CD8-positive, alpha-beta T cell (primary cell): ENCODE measurements at regions of chr2 and their contacts with region 1.

Region 1: GRCh38 chr2:227238238-227239237 is 74.1 kb downstream of the COL4A3 start:
- DNase-seq: peak; percentile 7 to 70 (median 56)
- ATAC-seq: no peak
- H3K4me3 ChIP-seq: no peak overlapping the region
- H3K4me3 Mint-ChIP-seq: no peak overlapping the region
- H3K27ac ChIP-seq: no peak overlapping the region
- H3K27ac Mint-ChIP-seq: no peak overlapping the region
- H3K4me1 ChIP-seq: no peaks in the 10 kb centered on the region
- H3K4me1 Mint-ChIP-seq: no peaks in the 10 kb centered on the region
- H3K27me3 ChIP-seq: no peaks in the 10 kb centered on the region
- H3K27me3 Mint-ChIP-seq: peaks cover 11% of the 10 kb centered on the region
- CTCF ChIP-seq: peak; percentile 98

Region 2: GRCh38 chr2:225668606-225669266 is 1569.8 kb before region 1 on chr2:
- CTCF ChIA-PET with region 1: interaction called, 9 read pairs
- POLR2A ChIA-PET with region 1: no interaction called
- intact Hi-C with region 1: loop called in 1 of 2 experiments (anchors 2 kb)
- DNase-seq: peak in 3 of 9 experiments; percentile 17 to 67 (median 52)
- ATAC-seq: peak; percentile 68
- H3K4me3 ChIP-seq: no peak overlapping the region
- H3K4me3 Mint-ChIP-seq: no peak overlapping the region
- H3K27ac ChIP-seq: no peak overlapping the region
- H3K27ac Mint-ChIP-seq: no peak overlapping the region
- H3K4me1 ChIP-seq: no peaks in the 10 kb centered on the region
- H3K4me1 Mint-ChIP-seq: no peaks in the 10 kb centered on the region
- H3K27me3 ChIP-seq: no peaks in the 10 kb centered on the region
- H3K27me3 Mint-ChIP-seq: peaks cover 7% of the 10 kb centered on the region
- CTCF ChIP-seq: peak; percentile 74

Region 3: DNA sequence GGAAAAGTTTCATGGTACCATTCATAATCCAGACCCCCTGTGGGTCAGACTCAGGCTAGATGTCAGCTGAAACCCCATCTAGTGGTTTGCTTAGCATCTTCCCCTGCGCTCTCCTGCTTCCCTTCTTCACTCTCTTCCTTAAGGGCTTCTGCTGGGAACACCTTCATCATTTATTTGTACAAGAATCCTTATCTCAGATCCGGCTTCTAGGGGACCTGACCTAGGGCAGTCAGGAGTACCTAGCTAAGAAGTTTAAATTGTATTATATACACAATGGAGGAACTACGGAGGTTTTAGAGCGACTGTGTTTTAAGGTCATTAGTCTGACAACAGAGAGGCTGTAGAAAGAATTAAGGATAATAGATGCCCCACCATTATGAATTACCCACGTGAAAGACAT is 950.6 kb before region 1 on chr2:
- CTCF ChIA-PET with region 1: no interaction called
- POLR2A ChIA-PET with region 1: no interaction called
- intact Hi-C with region 1: no loop called
- DNase-seq: no peak
- ATAC-seq: no peak
- H3K4me3 ChIP-seq: no peak overlapping the region
- H3K4me3 Mint-ChIP-seq: no peak overlapping the region
- H3K27ac ChIP-seq: no peak overlapping the region
- H3K27ac Mint-ChIP-seq: no peak overlapping the region
- H3K4me1 ChIP-seq: no peaks in the 10 kb centered on the region
- H3K4me1 Mint-ChIP-seq: no peaks in the 10 kb centered on the region
- H3K27me3 ChIP-seq: no peaks in the 10 kb centered on the region
- H3K27me3 Mint-ChIP-seq: peaks cover 10% of the 10 kb centered on the region
- CTCF ChIP-seq: no peak

Region 4: GRCh38 chr2:226813148-226813701 is 425.3 kb before region 1 on chr2:
- CTCF ChIA-PET with region 1: no interaction called
- POLR2A ChIA-PET with region 1: no interaction called
- intact Hi-C with region 1: loop called (anchors 2 to 10 kb)
- DNase-seq: peak in 2 of 9 experiments; percentile 10 to 21
- ATAC-seq: peak; percentile 31
- H3K4me3 ChIP-seq: no peak overlapping the region
- H3K4me3 Mint-ChIP-seq: no peak overlapping the region
- H3K27ac ChIP-seq: no peak overlapping the region
- H3K27ac Mint-ChIP-seq: no peak overlapping the region
- H3K4me1 ChIP-seq: no peaks in the 10 kb centered on the region
- H3K4me1 Mint-ChIP-seq: no peaks in the 10 kb centered on the region
- H3K27me3 ChIP-seq: peaks cover 0 to 7% of the 10 kb centered on the region in 2 experiments
- H3K27me3 Mint-ChIP-seq: peaks cover 37% of the 10 kb centered on the region
- CTCF ChIP-seq: no peak

Region 5: DNA sequence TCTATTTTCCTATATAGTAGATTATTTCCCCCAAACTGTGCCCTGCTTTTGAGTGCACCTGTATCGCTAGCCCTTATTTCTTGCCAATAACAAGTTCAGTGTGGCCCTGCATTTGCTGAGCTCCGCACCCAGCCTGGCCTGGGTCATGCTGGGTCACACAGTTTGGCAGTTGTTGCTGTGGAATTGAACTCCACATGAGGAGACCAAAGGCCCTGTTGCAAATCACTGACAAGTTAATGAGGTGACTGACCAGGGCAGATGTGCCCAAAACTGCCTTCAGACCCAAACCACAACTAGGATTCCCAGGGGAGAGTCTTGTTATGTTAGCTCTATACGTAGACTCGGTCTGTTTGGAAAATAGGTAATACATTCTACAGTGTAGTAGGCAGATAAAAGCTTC is 105.6 kb before region 1 on chr2:
- CTCF ChIA-PET with region 1: no interaction called
- POLR2A ChIA-PET with region 1: no interaction called
- intact Hi-C with region 1: loop called (anchors 2 to 5 kb)
- DNase-seq: no peak
- ATAC-seq: no peak
- H3K4me3 ChIP-seq: no peak overlapping the region
- H3K4me3 Mint-ChIP-seq: no peak overlapping the region
- H3K27ac ChIP-seq: no peak overlapping the region
- H3K27ac Mint-ChIP-seq: no peak overlapping the region
- H3K4me1 ChIP-seq: no peaks in the 10 kb centered on the region
- H3K4me1 Mint-ChIP-seq: no peaks in the 10 kb centered on the region
- H3K27me3 ChIP-seq: no peaks in the 10 kb centered on the region
- H3K27me3 Mint-ChIP-seq: peaks cover 17% of the 10 kb centered on the region
- CTCF ChIP-seq: no peak

Region 6: DNA sequence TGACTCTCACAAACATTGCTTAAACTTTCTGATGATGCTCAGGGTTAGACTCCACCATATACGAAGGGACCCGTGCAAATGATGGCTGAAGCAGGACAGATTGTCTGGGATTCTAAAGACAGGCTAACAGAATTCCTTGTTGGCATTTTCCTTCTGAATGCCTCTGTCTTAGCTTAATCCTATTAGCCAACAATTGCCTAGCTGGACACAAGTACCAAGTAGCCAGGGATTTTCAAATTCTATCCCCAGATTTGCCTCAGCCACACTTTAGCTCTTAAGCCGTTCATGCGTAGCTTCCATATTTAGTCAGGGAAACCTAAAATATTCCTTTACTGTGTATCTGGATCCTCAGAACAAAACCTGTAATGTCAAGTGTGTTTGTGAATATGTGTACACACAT is 34.1 kb before region 1 on chr2:
- CTCF ChIA-PET with region 1: no interaction called
- POLR2A ChIA-PET with region 1: no interaction called
- intact Hi-C with region 1: no loop called
- DNase-seq: no peak
- ATAC-seq: no peak
- H3K4me3 ChIP-seq: no peak overlapping the region
- H3K4me3 Mint-ChIP-seq: no peak overlapping the region
- H3K27ac ChIP-seq: no peak overlapping the region
- H3K27ac Mint-ChIP-seq: no peak overlapping the region
- H3K4me1 ChIP-seq: no peaks in the 10 kb centered on the region
- H3K4me1 Mint-ChIP-seq: no peaks in the 10 kb centered on the region
- H3K27me3 ChIP-seq: no peaks in the 10 kb centered on the region
- H3K27me3 Mint-ChIP-seq: peaks cover 28% of the 10 kb centered on the region
- CTCF ChIP-seq: no peak

Region 7: GRCh38 chr2:227248876-227249275 is 10.3 kb after region 1 on chr2:
- CTCF ChIA-PET with region 1: interaction called, 46 read pairs
- POLR2A ChIA-PET with region 1: no interaction called
- intact Hi-C with region 1: no loop called
- DNase-seq: no peak
- ATAC-seq: no peak
- H3K4me3 ChIP-seq: no peak overlapping the region
- H3K4me3 Mint-ChIP-seq: no peak overlapping the region
- H3K27ac ChIP-seq: no peak overlapping the region
- H3K27ac Mint-ChIP-seq: no peak overlapping the region
- H3K4me1 ChIP-seq: no peaks in the 10 kb centered on the region
- H3K4me1 Mint-ChIP-seq: no peaks in the 10 kb centered on the region
- H3K27me3 ChIP-seq: no peaks in the 10 kb centered on the region
- H3K27me3 Mint-ChIP-seq: peaks cover 5% of the 10 kb centered on the region
- CTCF ChIP-seq: no peak

Region 8: DNA sequence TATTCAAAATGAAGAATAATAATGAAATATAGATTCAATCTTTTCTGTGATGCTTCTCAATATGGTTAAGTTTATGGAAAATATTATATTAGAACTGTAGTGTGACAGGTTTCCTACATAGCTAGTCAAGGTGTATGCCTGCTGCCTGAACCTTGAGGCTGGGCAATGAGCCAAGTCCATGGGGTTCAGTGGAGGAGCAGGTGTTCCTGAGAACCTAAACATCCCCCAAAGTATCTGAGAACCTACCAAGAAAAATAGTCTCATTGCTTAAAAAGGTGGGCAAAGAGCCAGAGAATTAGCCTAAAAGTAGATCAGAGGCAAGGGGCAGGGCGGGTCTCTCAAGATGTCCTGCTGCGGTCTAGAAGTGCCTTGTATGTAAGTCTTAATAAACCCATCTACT is 1128.8 kb after region 1 on chr2:
- CTCF ChIA-PET with region 1: no interaction called
- POLR2A ChIA-PET with region 1: no interaction called
- intact Hi-C with region 1: no loop called
- DNase-seq: no peak
- ATAC-seq: no peak
- H3K4me3 ChIP-seq: no peak overlapping the region
- H3K4me3 Mint-ChIP-seq: no peak overlapping the region
- H3K27ac ChIP-seq: no peak overlapping the region
- H3K27ac Mint-ChIP-seq: no peak overlapping the region
- H3K4me1 ChIP-seq: no peaks in the 10 kb centered on the region
- H3K4me1 Mint-ChIP-seq: no peaks in the 10 kb centered on the region
- H3K27me3 ChIP-seq: no peaks in the 10 kb centered on the region
- H3K27me3 Mint-ChIP-seq: no peaks in the 10 kb centered on the region
- CTCF ChIP-seq: no peak